K562 (cell line): ENCODE measurements at regions of chr1 and their contacts with region 1.

Region 1: DNA sequence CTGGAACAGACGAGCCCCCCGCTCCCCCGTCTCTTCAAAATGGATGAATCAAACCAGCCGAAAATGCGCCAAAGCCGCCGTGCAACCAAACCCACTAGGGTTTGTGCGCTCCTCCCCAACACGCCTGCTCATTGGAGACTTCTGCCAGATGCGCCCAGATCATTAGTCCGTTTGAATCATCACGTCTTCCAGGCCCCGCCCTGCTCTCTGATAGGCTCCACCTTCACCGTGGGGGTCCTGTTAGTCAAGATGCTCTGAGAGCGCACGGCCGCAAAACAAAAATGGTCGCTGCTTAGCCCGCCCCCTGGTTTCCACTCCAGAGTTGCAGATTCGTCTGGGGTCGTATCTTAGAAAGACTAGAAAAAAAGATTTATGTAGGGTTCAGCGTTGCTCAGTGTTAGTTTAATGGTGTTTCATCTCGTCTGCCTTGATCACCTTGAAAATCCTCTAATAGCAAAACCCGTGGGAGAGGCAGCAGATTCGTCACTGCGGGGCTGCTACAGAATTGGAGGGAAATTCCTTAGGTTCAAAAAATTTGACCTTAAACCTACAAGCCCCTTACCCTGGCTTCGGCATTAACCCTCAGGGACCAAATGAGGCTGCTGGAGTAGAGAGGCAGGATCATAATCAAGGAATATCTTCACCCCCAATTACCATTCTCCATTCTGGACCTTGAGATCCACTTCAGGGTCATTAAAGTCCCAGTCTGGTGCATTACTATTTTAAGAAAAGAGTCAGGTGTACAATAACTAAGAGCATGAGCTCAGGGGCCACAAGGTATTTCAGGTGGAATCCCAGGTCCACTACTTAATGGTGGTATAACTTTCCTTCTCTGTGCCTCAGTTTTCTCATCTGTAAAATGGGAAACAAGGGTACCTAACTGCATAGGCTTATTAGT is at the start of gene NUCKS1:
- DNase-seq: peak; percentile 84 to 100 (median 90)
- ATAC-seq: peak; percentile 84
- H3K4me3 ChIP-seq: peak within 1 kb of the TSS; percentile 71
- H3K27ac ChIP-seq: peak within 1 kb of the TSS; percentile 96
- H3K4me1 ChIP-seq: peaks cover 8 to 33% of the 10 kb centered on the region in 2 experiments; a peak in 4 of 5 replicates
- H3K27me3 ChIP-seq: no peaks in the 10 kb centered on the region
- CTCF ChIP-seq: peak in 1 of 3 experiments; percentile 11; a peak in 2 of 6 replicates
- EP300 ChIP-seq: peak; percentile 99
- POLR2A ChIP-seq: peak; percentile 85
- RAD21 ChIP-seq: no peak
- polyA plus RNA-seq, gene NUCKS1: 66.7 to 83.4 TPM

Region 2: GRCh38 chr1:205739348-205740160 is 10.8 kb before region 1 on chr1:
- CTCF ChIA-PET with region 1: no interaction called
- POLR2A ChIA-PET with region 1: interaction called, 44 read pairs
- in situ Hi-C with region 1: no loop called
- intact Hi-C with region 1: no loop called
- DNase-seq: no peak
- ATAC-seq: no peak; the same call in 2 of the 3 replicates
- H3K4me3 ChIP-seq: no peak overlapping the region
- H3K27ac ChIP-seq: no peak overlapping the region
- H3K4me1 ChIP-seq: peaks cover 7% of the 10 kb centered on the region in 2 experiments; a peak in 3 of 5 replicates
- H3K27me3 ChIP-seq: no peaks in the 10 kb centered on the region
- CTCF ChIP-seq: 0 out of 6 replicates have a peak, but pooled peaks of 2 of the 3 experiments have one; percentile 17 to 20
- EP300 ChIP-seq: no peak
- POLR2A ChIP-seq: no peak
- RAD21 ChIP-seq: no peak

Region 3: GRCh38 chr1:205766038-205766437 is 15.7 kb after region 1 on chr1:
- CTCF ChIA-PET with region 1: no interaction called
- POLR2A ChIA-PET with region 1: interaction called, 20 read pairs
- in situ Hi-C with region 1: no loop called
- intact Hi-C with region 1: no loop called
- DNase-seq: no peak
- ATAC-seq: peak; percentile 56
- H3K4me3 ChIP-seq: no peak overlapping the region
- H3K27ac ChIP-seq: no peak overlapping the region
- H3K4me1 ChIP-seq: no peaks in the 10 kb centered on the region; a peak in 1 of 5 replicates
- H3K27me3 ChIP-seq: no peaks in the 10 kb centered on the region
- CTCF ChIP-seq: no peak
- EP300 ChIP-seq: no peak
- POLR2A ChIP-seq: no peak
- RAD21 ChIP-seq: no peak

Region 4: GRCh38 chr1:205775015-205775716 is 24.8 kb after region 1 on chr1 and contains the start of gene RAB29:
- CTCF ChIA-PET with region 1: no interaction called
- POLR2A ChIA-PET with region 1: interaction called, 12 read pairs
- in situ Hi-C with region 1: no loop called
- intact Hi-C with region 1: no loop called
- DNase-seq: peak; percentile 82 to 91 (median 86)
- ATAC-seq: peak; percentile 98
- H3K4me3 ChIP-seq: peak within 1 kb of the TSS; percentile 59
- H3K27ac ChIP-seq: peak within 1 kb of the TSS; percentile 26
- H3K4me1 ChIP-seq: peaks cover 8 to 9% of the 10 kb centered on the region in 2 experiments; a peak in 4 of 5 replicates
- H3K27me3 ChIP-seq: no peaks in the 10 kb centered on the region; a peak in 1 of 5 replicates
- CTCF ChIP-seq: no peak
- EP300 ChIP-seq: no peak
- POLR2A ChIP-seq: peak; percentile 68
- RAD21 ChIP-seq: no peak
- polyA plus RNA-seq, gene RAB29: 6.3 to 7.5 TPM

Region 5: GRCh38 chr1:205812878-205813754 is 62.7 kb after region 1 on chr1 and contains the start of gene SLC41A1:
- CTCF ChIA-PET with region 1: no interaction called
- POLR2A ChIA-PET with region 1: interaction called, 3 read pairs
- in situ Hi-C with region 1: no loop called
- intact Hi-C with region 1: loop called (anchors 1 kb)
- DNase-seq: peak; percentile 95 to 100 (median 100)
- ATAC-seq: peak; percentile 95
- H3K4me3 ChIP-seq: peak within 1 kb of the TSS; percentile 85
- H3K27ac ChIP-seq: peak within 1 kb of the TSS; percentile 60
- H3K4me1 ChIP-seq: peaks cover 32 to 41% of the 10 kb centered on the region in 2 experiments; a peak in 4 of 5 replicates
- H3K27me3 ChIP-seq: no peaks in the 10 kb centered on the region
- CTCF ChIP-seq: no peak
- EP300 ChIP-seq: no peak
- POLR2A ChIP-seq: peak; percentile 68
- RAD21 ChIP-seq: no peak
- polyA plus RNA-seq, gene SLC41A1: 4.1 to 5.5 TPM

Region 6: DNA sequence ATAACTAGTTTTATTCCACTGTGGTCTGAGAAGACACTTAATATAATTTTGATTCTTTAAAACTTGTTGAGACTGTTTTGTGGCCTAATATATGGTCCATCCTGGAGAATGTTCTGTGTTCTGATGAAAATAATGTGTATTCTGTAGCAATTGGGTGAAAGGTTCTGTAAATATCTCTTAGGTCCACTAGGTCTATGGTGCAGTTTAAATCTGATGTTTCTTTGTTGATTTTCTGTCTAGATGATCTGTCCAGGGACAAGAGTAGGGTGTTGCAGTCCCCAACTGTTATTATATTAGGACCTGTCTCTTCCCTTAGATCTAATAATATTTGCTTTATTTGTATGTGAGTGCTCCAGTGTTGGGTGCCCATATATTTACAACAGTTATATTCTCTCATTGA is 133.4 kb after region 1 on chr1:
- CTCF ChIA-PET with region 1: no interaction called
- POLR2A ChIA-PET with region 1: no interaction called
- in situ Hi-C with region 1: no loop called
- intact Hi-C with region 1: no loop called
- DNase-seq: no peak
- ATAC-seq: no peak
- H3K4me3 ChIP-seq: no peak overlapping the region
- H3K27ac ChIP-seq: no peak overlapping the region
- H3K4me1 ChIP-seq: no peaks in the 10 kb centered on the region
- H3K27me3 ChIP-seq: no peaks in the 10 kb centered on the region
- CTCF ChIP-seq: no peak
- EP300 ChIP-seq: no peak
- POLR2A ChIP-seq: no peak
- RAD21 ChIP-seq: no peak